GM12878 (cell line): ENCODE measurements at regions of chr14 and their contacts with region 1.

Region 1: GRCh38 chr14:33979613-33980276 is 28.9 kb upstream of the EGLN3 start:
- DNase-seq: peak; percentile 43
- ATAC-seq: peak; percentile 78
- H3K4me3 ChIP-seq: no peak overlapping the region
- H3K27ac ChIP-seq: no peak overlapping the region
- H3K4me1 ChIP-seq: no peaks in the 10 kb centered on the region
- H3K27me3 ChIP-seq: no peaks in the 10 kb centered on the region
- CTCF ChIP-seq: no peak
- EP300 ChIP-seq: peak; percentile 39 to 68; a peak in 2 of 4 replicates
- POLR2A ChIP-seq: no peak
- RAD21 ChIP-seq: no peak

Region 2: GRCh38 chr14:33728010-33728498 is 251.7 kb before region 1 on chr14:
- CTCF ChIA-PET with region 1: no interaction called
- POLR2A ChIA-PET with region 1: no interaction called
- RAD21 ChIA-PET with region 1: no interaction called
- SMC1A ChIA-PET with region 1: no interaction called
- in situ Hi-C with region 1: no loop called
- intact Hi-C with region 1: no loop called
- DNase-seq: no peak
- ATAC-seq: peak; percentile 72
- H3K4me3 ChIP-seq: no peak overlapping the region
- H3K27ac ChIP-seq: no peak overlapping the region
- H3K4me1 ChIP-seq: no peaks in the 10 kb centered on the region
- H3K27me3 ChIP-seq: no peaks in the 10 kb centered on the region; a peak in 1 of 4 replicates
- CTCF ChIP-seq: no peak
- EP300 ChIP-seq: no peak
- POLR2A ChIP-seq: no peak
- RAD21 ChIP-seq: no peak

Region 3: GRCh38 chr14:33992274-33993007 is 12.7 kb after region 1 on chr14:
- CTCF ChIA-PET with region 1: interaction called, 3 read pairs
- POLR2A ChIA-PET with region 1: interaction called, 5 read pairs
- RAD21 ChIA-PET with region 1: interaction called, 8 read pairs
- SMC1A ChIA-PET with region 1: interaction called, 24 read pairs
- in situ Hi-C with region 1: no loop called
- intact Hi-C with region 1: no loop called
- DNase-seq: no peak
- ATAC-seq: no peak
- H3K4me3 ChIP-seq: no peak overlapping the region
- H3K27ac ChIP-seq: no peak overlapping the region
- H3K4me1 ChIP-seq: no peaks in the 10 kb centered on the region
- H3K27me3 ChIP-seq: no peaks in the 10 kb centered on the region
- CTCF ChIP-seq: no peak
- EP300 ChIP-seq: no peak
- POLR2A ChIP-seq: no peak
- RAD21 ChIP-seq: no peak

Region 4: GRCh38 chr14:34003691-34004090 is 23.9 kb after region 1 on chr14:
- CTCF ChIA-PET with region 1: interaction called, 4 read pairs
- POLR2A ChIA-PET with region 1: interaction called, 8 read pairs
- RAD21 ChIA-PET with region 1: interaction called, 3 read pairs
- SMC1A ChIA-PET with region 1: interaction called, 20 read pairs
- in situ Hi-C with region 1: no loop called
- intact Hi-C with region 1: no loop called
- DNase-seq: no peak
- ATAC-seq: peak; percentile 19; the same call in 2 of the 3 replicates
- H3K4me3 ChIP-seq: no peak overlapping the region
- H3K27ac ChIP-seq: no peak overlapping the region
- H3K4me1 ChIP-seq: peaks cover 6% of the 10 kb centered on the region
- H3K27me3 ChIP-seq: no peaks in the 10 kb centered on the region
- CTCF ChIP-seq: no peak
- EP300 ChIP-seq: no peak
- POLR2A ChIP-seq: no peak
- RAD21 ChIP-seq: no peak

Region 5: DNA sequence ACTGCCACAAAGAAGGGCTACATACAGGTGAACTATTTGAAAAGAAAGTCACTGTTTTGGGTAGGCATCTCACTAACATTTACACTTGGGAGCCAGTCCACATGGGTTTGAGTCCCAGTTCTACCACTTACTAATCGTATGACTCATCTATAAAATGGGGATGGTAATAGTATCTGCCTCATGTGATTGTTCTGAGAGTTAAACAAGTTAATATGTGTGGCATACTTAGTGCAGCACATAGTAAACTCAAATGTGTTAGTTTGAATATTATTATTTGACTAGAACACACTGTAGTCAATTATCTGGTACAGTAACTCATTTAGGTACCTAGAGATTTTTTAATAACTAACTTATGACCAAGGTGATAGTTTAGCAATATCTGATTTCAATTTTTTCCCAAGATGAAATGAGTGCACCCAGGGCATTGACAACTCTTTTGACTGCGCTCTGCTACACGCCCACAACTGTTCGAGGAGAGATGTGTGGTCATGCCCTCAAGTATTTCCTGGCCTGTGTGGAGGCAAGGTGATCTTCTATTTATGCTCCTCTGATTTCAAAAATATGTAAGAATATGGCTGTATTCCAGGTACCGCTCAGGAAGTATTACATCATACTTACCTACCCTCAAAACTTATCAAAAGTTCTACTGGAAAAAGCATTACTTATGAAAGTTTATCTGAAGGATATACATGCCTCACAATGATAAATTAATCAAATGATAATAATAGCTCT is 181.8 kb after region 1 on chr14:
- CTCF ChIA-PET with region 1: no interaction called
- POLR2A ChIA-PET with region 1: no interaction called
- RAD21 ChIA-PET with region 1: no interaction called
- SMC1A ChIA-PET with region 1: no interaction called
- in situ Hi-C with region 1: no loop called
- intact Hi-C with region 1: no loop called
- DNase-seq: no peak
- ATAC-seq: peak; percentile 66
- H3K4me3 ChIP-seq: no peak overlapping the region
- H3K27ac ChIP-seq: no peak overlapping the region
- H3K4me1 ChIP-seq: no peaks in the 10 kb centered on the region
- H3K27me3 ChIP-seq: no peaks in the 10 kb centered on the region
- CTCF ChIP-seq: no peak
- EP300 ChIP-seq: no peak
- POLR2A ChIP-seq: no peak
- RAD21 ChIP-seq: no peak